CD4-positive, alpha-beta T cell (primary cell): ENCODE measurements at regions of chr7 and their contacts with region 1.

Region 1: GRCh38 chr7:73578342-73579127 is at the start of gene TBL2:
- DNase-seq: peak; percentile 96 to 99 (median 99)
- ATAC-seq: peak; percentile 89
- H3K4me3 ChIP-seq: peak within 1 kb of the TSS; percentile 63
- H3K4me3 Mint-ChIP-seq: peak within 1 kb of the TSS; percentile 86
- H3K27ac ChIP-seq: peak within 1 kb of the TSS; percentile 78 to 88
- H3K27ac Mint-ChIP-seq: peak within 1 kb of the TSS; percentile 89
- H3K4me1 ChIP-seq: peaks cover 35% of the 10 kb centered on the region
- H3K4me1 Mint-ChIP-seq: peaks cover 23% of the 10 kb centered on the region
- H3K27me3 ChIP-seq: no peaks in the 10 kb centered on the region
- H3K27me3 Mint-ChIP-seq: no peaks in the 10 kb centered on the region
- CTCF ChIP-seq: no peak
- total RNA-seq, gene TBL2: 25.2 to 27.2 TPM

Region 2: DNA sequence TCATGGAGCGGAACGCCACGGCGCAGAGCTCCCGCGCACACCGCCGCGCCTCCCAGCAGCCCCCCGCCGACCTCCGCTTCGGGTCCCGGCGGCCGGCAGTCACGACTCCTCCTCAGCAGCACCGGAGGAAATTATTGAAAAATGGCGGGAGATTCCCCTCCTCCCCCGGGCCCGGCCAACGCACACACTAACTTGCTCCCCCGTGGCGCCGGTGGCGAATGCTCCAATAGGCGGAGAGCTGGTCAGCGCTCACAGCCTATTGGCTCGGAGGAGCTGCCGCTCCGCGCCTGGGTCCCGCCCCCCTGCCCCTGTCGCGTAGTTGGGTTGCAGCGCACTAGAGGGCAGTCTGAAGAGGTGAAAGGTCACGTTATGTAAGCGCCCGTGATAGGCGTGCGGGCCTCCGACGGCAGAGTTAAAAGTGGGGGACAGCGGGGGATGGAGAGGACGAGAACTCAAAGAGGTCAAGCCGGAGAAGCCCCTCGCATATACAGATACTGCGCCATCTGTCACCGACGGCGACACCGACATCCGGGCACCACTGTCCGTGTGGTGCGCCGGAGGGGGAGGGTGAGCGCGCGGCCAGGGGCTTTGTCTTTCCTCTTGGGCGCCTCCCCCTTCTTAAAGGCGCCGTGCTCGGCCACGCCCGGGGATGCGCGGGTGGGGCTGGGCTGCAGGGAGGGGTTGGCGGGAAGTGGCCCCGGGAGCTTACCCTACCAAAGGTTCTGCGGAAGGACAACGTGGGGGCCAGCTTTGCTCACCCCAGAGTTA is 56.2 kb before region 1 on chr7 and contains the start of gene BAZ1B:
- CTCF ChIA-PET with region 1: no interaction called
- POLR2A ChIA-PET with region 1: interaction called, 38 read pairs
- intact Hi-C with region 1: loop called (anchors 1 kb)
- DNase-seq: peak; percentile 91 to 98 (median 96)
- ATAC-seq: peak; percentile 93
- H3K4me3 ChIP-seq: peak within 1 kb of the TSS; percentile 67
- H3K4me3 Mint-ChIP-seq: peak within 1 kb of the TSS; percentile 99
- H3K27ac ChIP-seq: peak within 1 kb of the TSS; percentile 87 to 92
- H3K27ac Mint-ChIP-seq: peak within 1 kb of the TSS; percentile 99
- H3K4me1 ChIP-seq: peaks cover 62% of the 10 kb centered on the region
- H3K4me1 Mint-ChIP-seq: peaks cover 74% of the 10 kb centered on the region
- H3K27me3 ChIP-seq: no peaks in the 10 kb centered on the region
- H3K27me3 Mint-ChIP-seq: no peaks in the 10 kb centered on the region
- CTCF ChIP-seq: no peak
- total RNA-seq, gene BAZ1B: 32.8 to 35.5 TPM

Region 3: GRCh38 chr7:73557108-73557396 is 21.5 kb before region 1 on chr7:
- CTCF ChIA-PET with region 1: no interaction called
- POLR2A ChIA-PET with region 1: interaction called, 26 read pairs
- intact Hi-C with region 1: loop called (anchors 1 kb)
- DNase-seq: peak; percentile 77 to 97 (median 88)
- ATAC-seq: peak; percentile 92
- H3K4me3 ChIP-seq: peak overlapping the region; percentile 96
- H3K4me3 Mint-ChIP-seq: peak overlapping the region; percentile 96
- H3K27ac ChIP-seq: peak overlapping the region; percentile 97 to 98
- H3K27ac Mint-ChIP-seq: peak overlapping the region; percentile 96
- H3K4me1 ChIP-seq: peaks cover 35% of the 10 kb centered on the region
- H3K4me1 Mint-ChIP-seq: peaks cover 39% of the 10 kb centered on the region
- H3K27me3 ChIP-seq: no peaks in the 10 kb centered on the region
- H3K27me3 Mint-ChIP-seq: no peaks in the 10 kb centered on the region
- CTCF ChIP-seq: no peak

Region 4: DNA sequence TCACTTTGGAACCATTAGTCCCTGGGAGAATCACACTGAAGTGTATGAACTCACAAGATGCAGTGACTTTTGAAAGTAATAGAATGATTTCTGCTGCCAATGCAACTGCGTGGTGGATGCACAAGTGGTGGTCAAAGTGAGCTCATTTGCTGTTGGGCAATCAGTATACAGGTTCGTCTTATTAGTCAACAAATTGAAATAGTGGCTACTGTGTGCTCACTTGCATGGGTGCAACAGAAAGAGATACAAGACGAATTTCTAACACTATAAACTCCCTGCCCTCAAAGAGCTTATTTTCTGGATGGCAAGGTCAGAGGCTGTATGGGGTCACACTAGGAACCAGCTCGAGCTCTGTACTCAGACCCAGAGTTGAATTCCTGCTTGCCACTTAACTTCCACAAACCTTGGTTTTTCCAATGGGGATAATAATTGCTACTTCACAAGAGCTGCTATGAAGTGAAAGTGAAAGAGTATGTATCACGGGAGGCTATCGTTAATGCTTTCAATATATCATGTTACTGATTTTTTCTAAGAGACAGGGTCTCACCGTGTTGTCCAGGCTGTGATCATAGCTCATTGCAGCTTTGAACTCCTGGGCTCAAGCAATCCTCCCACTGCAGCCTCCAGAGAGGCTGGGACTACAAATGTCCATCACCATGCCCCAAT is 12.7 kb before region 1 on chr7:
- CTCF ChIA-PET with region 1: interaction called, 3 read pairs
- POLR2A ChIA-PET with region 1: interaction called, 14 read pairs
- intact Hi-C with region 1: no loop called
- DNase-seq: peak in 2 of 14 experiments; percentile 19 to 35
- ATAC-seq: no peak
- H3K4me3 ChIP-seq: peak overlapping the region; percentile 55
- H3K4me3 Mint-ChIP-seq: peak overlapping the region; percentile 82
- H3K27ac ChIP-seq: no peak overlapping the region
- H3K27ac Mint-ChIP-seq: peak overlapping the region; percentile 12
- H3K4me1 ChIP-seq: peaks cover 20% of the 10 kb centered on the region
- H3K4me1 Mint-ChIP-seq: peaks cover 34% of the 10 kb centered on the region
- H3K27me3 ChIP-seq: no peaks in the 10 kb centered on the region
- H3K27me3 Mint-ChIP-seq: no peaks in the 10 kb centered on the region
- CTCF ChIP-seq: no peak

Region 5: GRCh38 chr7:73683056-73683964 is 104.8 kb after region 1 on chr7 and contains the starts of genes BUD23 and DNAJC30:
- CTCF ChIA-PET with region 1: no interaction called
- POLR2A ChIA-PET with region 1: no interaction called
- intact Hi-C with region 1: loop called in 1 of 2 experiments (anchors 2 kb)
- DNase-seq: peak; percentile 93 to 98 (median 96)
- ATAC-seq: peak; percentile 96
- H3K4me3 ChIP-seq: peak within 1 kb of the TSS; percentile 71
- H3K4me3 Mint-ChIP-seq: peak within 1 kb of the TSS; percentile 91
- H3K27ac ChIP-seq: peak within 1 kb of the TSS; percentile 69 to 86
- H3K27ac Mint-ChIP-seq: peak within 1 kb of the TSS; percentile 92
- H3K4me1 ChIP-seq: peaks cover 39% of the 10 kb centered on the region
- H3K4me1 Mint-ChIP-seq: peaks cover 35% of the 10 kb centered on the region
- H3K27me3 ChIP-seq: no peaks in the 10 kb centered on the region
- H3K27me3 Mint-ChIP-seq: no peaks in the 10 kb centered on the region
- CTCF ChIP-seq: no peak
- total RNA-seq, gene BUD23: 96.1 to 103 TPM
- total RNA-seq, gene DNAJC30: 14.0 to 14.4 TPM